Heart left ventricle (tissue), 16 donors: ENCODE measurements at regions of chr3 and their contacts with region 1.

Region 1: DNA sequence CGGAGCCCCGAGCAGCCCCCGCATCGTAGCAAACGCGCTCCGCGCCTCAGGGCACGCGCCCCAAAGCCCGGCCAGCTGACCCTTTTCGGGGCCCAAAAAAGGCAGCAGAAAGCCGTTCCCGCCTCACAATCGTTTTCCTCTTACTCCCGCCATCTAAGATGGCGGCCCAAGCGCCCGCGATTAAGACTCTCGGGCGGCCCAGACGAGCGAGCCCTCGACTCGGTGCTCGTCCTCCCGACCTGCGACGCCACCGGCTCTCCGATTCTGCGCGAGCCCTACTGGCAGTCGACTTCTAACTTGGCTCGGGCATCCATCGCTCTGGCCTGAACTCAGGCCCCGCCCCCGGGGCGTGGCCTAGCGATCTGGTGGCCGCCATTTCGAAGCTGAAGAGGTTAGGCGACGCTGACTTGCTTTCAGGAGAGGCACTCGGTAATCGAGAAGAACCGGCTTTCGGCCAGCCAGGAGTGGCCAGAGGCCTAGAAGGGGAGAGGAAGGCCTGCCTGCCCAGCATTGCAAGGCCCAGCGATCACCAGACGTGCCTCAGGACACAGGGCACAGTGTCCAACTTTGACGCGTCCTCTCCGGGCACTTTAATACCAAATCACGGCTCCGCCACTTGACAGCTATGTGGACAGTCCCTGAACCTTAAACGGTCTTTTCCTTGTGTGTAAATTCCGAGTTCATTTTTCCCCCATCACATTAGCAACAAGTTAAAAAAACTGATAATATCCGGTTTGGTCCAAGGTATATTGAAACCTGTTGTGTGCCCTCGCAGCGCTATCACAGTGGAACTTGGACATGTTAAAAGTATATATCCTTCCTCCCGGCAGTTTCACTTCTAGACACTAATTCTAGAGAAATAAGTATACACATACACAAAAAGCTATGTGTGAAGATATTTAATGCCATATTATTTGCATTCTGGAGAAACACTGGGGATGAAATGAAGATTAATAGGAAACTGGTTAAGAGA is at the start of gene RAF1:
- DNase-seq: peak; percentile 98 to 99 (median 99)
- ATAC-seq: peak; percentile 90 to 98 (median 95)
- H3K4me3 ChIP-seq: peak within 1 kb of the TSS; percentile 69 to 100 (median 92)
- H3K27ac ChIP-seq: peak within 1 kb of the TSS; percentile 96 to 100 (median 100)
- H3K4me1 ChIP-seq: peaks cover 0 to 42% (median 30%) of the 10 kb centered on the region in 12 donors
- H3K27me3 ChIP-seq: no peaks in the 10 kb centered on the region
- CTCF ChIP-seq: peak in 2 of 12 donors; percentile 2 to 9
- POLR2A ChIP-seq: peak; percentile 17 to 94
- total RNA-seq, gene RAF1: 99.2 to 197 (median 135) TPM

Region 2: DNA sequence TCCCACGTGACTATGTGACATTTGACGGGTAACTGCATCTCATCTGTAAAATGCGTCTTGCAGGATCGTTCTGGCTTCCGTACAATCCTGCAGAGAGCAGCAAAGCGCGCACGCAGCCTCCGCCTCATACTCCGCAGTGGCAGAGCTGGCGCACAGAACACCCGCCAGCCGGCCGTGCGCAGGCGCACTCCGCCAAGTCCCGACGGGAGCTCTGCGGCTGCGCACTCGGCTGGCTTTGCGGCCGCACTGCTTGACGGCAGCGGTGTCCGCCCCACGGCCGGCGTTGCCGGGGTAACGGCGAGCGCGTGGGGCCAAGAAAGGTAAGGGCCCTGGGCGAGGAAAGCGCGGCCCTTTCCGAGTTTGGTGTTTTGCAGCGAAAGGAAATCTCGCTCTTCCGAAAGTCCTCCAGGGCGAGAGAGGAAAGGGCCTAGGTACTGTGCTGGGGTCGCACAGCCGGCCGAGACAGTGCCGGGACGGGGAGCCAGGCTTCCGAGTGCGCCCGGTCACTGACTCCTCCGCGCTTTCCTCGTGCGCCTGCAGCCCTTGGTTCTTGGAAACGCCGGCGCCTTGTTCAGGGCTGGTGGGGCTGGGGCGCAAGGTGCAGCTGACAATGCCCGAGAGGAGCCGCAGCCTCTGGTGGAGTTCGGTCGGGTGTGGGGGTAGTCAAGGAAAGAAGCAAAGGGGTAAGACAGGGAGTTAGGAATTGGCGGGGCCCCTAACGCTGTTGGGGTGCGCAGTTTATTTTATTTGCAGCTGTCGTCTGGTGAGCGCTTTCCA is 179.8 kb before region 1 on chr3 and contains the start of gene TSEN2:
- intact Hi-C with region 1: loop called in 1 of 10 experiments (anchors 10 kb)
- DNase-seq: peak; percentile 92 to 98 (median 95)
- ATAC-seq: peak; percentile 88 to 96 (median 95)
- H3K4me3 ChIP-seq: peak within 1 kb of the TSS; percentile 58 to 94 (median 78)
- H3K27ac ChIP-seq: peak within 1 kb of the TSS; percentile 44 to 86 (median 82)
- H3K4me1 ChIP-seq: peaks cover 0 to 41% (median 19%) of the 10 kb centered on the region in 12 donors
- H3K27me3 ChIP-seq: no peaks in the 10 kb centered on the region
- CTCF ChIP-seq: peak in 6 of 12 donors; percentile 10 to 43 (median 35)
- POLR2A ChIP-seq: peak in 1 of 2 donors; percentile 94
- total RNA-seq, gene TSEN2: 14.3 to 21.6 (median 18.4) TPM

Region 3: GRCh38 chr3:12556671-12557472 is 107.3 kb before region 1 on chr3 and contains the start of gene MKRN2:
- intact Hi-C with region 1: loop called in 7 of 10 experiments (anchors 2 to 10 kb)
- DNase-seq: peak; percentile 88 to 95 (median 89)
- ATAC-seq: peak; percentile 74 to 98 (median 94)
- H3K4me3 ChIP-seq: peak within 1 kb of the TSS; percentile 66 to 96 (median 88)
- H3K27ac ChIP-seq: peak within 1 kb of the TSS; percentile 91 to 99 (median 96)
- H3K4me1 ChIP-seq: peaks cover 0 to 61% (median 46%) of the 10 kb centered on the region in 12 donors
- H3K27me3 ChIP-seq: peaks cover 0 to 17% (median 0%) of the 10 kb centered on the region in 9 donors
- CTCF ChIP-seq: peak in 2 of 12 donors; percentile 5 to 9
- POLR2A ChIP-seq: peak; percentile 87 to 98
- total RNA-seq, gene MKRN2: 27.6 to 42.2 (median 32.9) TPM

Region 4: GRCh38 chr3:12588039-12589009 is 75.9 kb before region 1 on chr3:
- intact Hi-C with region 1: loop called in 1 of 10 experiments (anchors 10 kb)
- DNase-seq: no peak
- ATAC-seq: no peak
- H3K4me3 ChIP-seq: no peak overlapping the region
- H3K27ac ChIP-seq: peak overlapping the region in 6 of 12 donors; percentile 13 to 58 (median 33)
- H3K4me1 ChIP-seq: peaks cover 0 to 46% (median 10%) of the 10 kb centered on the region in 12 donors
- H3K27me3 ChIP-seq: no peaks in the 10 kb centered on the region
- CTCF ChIP-seq: no peak
- POLR2A ChIP-seq: no peak

Region 5: GRCh38 chr3:12601072-12601471 is 63.1 kb before region 1 on chr3:
- intact Hi-C with region 1: loop called in 2 of 10 experiments (anchors 5 to 10 kb)
- DNase-seq: no peak
- ATAC-seq: no peak
- H3K4me3 ChIP-seq: no peak overlapping the region
- H3K27ac ChIP-seq: peak overlapping the region in 1 of 12 donors; percentile 20
- H3K4me1 ChIP-seq: peaks cover 0 to 8% (median 0%) of the 10 kb centered on the region in 12 donors
- H3K27me3 ChIP-seq: no peaks in the 10 kb centered on the region
- CTCF ChIP-seq: peak in 6 of 12 donors; percentile 11 to 41 (median 19)
- POLR2A ChIP-seq: no peak

Region 6: GRCh38 chr3:12629560-12629959 is 34.7 kb before region 1 on chr3:
- intact Hi-C with region 1: loop called in 3 of 10 experiments (anchors 2 to 5 kb)
- DNase-seq: peak in 4 of 5 donors; percentile 41 to 79 (median 58)
- ATAC-seq: peak; percentile 83 to 91 (median 87)
- H3K4me3 ChIP-seq: peak overlapping the region in 3 of 12 donors; percentile 7 to 23 (median 8)
- H3K27ac ChIP-seq: peak overlapping the region; percentile 26 to 81 (median 66)
- H3K4me1 ChIP-seq: peaks cover 2 to 80% (median 53%) of the 10 kb centered on the region in 12 donors
- H3K27me3 ChIP-seq: no peaks in the 10 kb centered on the region
- CTCF ChIP-seq: no peak
- POLR2A ChIP-seq: no peak

Region 7: GRCh38 chr3:12706504-12707253 is 42.5 kb after region 1 on chr3:
- intact Hi-C with region 1: no loop called
- DNase-seq: peak in 4 of 5 donors; percentile 39 to 65 (median 45)
- ATAC-seq: peak in 3 of 4 donors; percentile 85 to 89 (median 87)
- H3K4me3 ChIP-seq: no peak overlapping the region
- H3K27ac ChIP-seq: no peak overlapping the region
- H3K4me1 ChIP-seq: peaks cover 0 to 22% (median 5%) of the 10 kb centered on the region in 12 donors
- H3K27me3 ChIP-seq: peaks cover 0 to 4% (median 0%) of the 10 kb centered on the region in 9 donors
- CTCF ChIP-seq: peak; percentile 43 to 77 (median 65)
- POLR2A ChIP-seq: no peak

Region 8: DNA sequence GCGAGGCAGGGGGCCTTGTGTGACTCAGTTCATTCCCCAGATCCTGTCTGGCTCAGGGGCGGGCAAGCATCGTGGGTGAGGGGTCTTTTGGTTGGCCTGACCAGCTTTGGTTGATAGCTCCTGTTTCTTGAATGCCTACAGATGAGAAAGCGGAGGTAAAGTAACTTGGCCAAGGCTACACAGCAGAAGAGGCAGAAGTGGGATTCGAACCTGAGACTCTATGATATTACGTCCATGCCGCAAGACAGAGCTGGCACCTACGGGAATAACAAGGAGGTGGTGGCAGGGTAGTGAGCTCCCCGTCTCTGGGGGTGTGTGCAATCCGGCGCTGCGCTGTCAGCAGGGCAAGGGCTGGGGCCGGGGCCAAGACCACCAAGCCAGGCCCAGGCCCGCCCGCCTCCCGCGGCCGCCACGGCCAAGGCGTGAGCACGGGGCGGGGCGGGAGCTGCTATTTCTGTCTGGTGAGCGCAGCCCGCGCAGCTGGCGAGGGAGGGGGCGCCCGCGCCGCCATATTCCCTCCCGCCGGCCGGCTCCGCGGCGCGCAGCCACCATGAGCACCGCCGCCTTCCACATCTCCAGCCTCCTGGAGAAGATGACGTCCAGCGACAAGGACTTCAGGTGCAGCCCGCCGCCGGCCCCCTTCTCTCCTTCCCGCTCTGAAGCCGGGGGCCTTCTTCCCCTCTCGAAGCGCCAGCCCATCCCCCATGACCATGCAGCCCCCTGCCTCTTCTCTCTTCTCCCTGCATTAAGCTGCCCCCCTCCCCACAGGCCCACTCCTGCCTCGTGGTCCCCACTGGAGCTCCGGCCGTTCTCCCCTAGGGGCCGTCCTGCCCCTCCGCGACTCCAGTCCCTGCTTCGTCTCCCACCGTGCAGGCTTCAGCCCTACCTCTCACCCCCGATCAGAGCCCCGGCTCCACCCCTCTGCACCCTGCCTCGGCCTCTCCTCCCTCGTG is 132.2 kb after region 1 on chr3 and contains the start of gene CAND2:
- intact Hi-C with region 1: loop called in 1 of 10 experiments (anchors 5 kb)
- DNase-seq: peak; percentile 73 to 90 (median 81)
- ATAC-seq: peak; percentile 51 to 89 (median 87)
- H3K4me3 ChIP-seq: peak within 1 kb of the TSS; percentile 48 to 86 (median 66)
- H3K27ac ChIP-seq: peak within 1 kb of the TSS; percentile 50 to 97 (median 89)
- H3K4me1 ChIP-seq: peaks cover 0 to 54% (median 9%) of the 10 kb centered on the region in 12 donors
- H3K27me3 ChIP-seq: no peaks in the 10 kb centered on the region
- CTCF ChIP-seq: no peak
- POLR2A ChIP-seq: peak; percentile 20 to 49
- total RNA-seq, gene CAND2: 44.6 to 87.5 (median 68.6) TPM